WTC11 (cell line): ENCODE measurements at regions of chr6 and their contacts with region 1.

Region 1: DNA sequence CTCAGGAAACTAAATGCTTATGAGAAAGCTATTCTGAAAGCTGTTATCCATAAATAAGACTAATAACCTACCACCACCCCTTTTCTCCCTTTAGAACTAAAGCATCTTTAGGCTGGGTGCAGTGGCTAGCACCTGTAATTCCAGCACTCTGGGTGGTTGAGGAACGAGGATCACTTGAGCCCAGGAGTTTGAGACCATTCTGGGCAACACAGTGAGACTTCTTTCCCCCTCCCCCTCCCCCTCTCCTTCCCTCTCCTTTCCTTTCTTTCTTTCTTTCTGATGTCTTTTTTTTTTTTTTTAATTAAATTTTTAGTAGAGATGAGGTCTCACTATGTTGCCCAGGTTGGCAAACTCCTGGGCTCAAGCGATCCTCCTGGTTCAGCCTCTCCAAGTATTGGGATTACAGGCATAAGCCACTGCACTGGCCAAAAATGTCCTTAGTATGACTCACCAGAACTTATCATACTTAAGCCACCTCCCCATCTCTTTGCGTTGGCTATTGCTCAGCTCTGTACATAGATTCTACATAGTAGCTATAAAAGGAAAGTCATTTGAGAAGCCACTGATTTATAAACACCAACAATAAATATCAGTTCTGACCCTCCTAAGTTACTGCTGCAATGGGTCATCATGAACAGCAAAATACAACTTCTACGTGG is 54.8 kb upstream of the SPDEF start:
- DNase-seq: no peak
- ATAC-seq: no peak
- H3K4me3 Mint-ChIP-seq: no peak overlapping the region
- H3K27ac Mint-ChIP-seq: peak overlapping the region; percentile 14; the same call in 1 of the 2 replicates
- H3K4me1 Mint-ChIP-seq: peaks cover 2% of the 10 kb centered on the region; the same call in 1 of the 2 replicates
- H3K27me3 Mint-ChIP-seq: no peaks in the 10 kb centered on the region
- CTCF ChIP-seq: no peak

Region 2: DNA sequence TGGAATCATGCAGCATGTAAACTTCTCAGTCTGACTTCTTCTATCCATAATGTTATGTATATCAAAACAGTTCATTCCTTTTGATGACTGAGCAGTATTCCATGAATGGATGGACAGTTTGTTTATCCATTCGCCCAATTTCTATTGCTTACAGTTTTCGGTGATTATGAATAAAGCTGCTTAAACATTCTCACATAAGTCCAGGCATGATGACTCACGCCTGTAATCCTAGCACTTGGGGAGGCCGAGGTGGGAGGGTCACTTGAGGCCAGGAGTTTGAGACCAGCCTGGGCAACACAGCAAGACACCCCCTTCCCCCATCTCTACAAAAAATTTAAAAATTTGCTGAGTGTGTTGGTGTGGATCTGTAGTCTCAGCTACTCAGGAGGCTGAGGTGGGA is 397.2 kb before region 1 on chr6:
- CTCF ChIA-PET with region 1: no interaction called
- POLR2A ChIA-PET with region 1: no interaction called
- DNase-seq: no peak
- ATAC-seq: no peak
- H3K4me3 Mint-ChIP-seq: no peak overlapping the region
- H3K27ac Mint-ChIP-seq: no peak overlapping the region; the same call in 1 of the 2 replicates
- H3K4me1 Mint-ChIP-seq: no peaks in the 10 kb centered on the region
- H3K27me3 Mint-ChIP-seq: no peaks in the 10 kb centered on the region
- CTCF ChIP-seq: no peak

Region 3: GRCh38 chr6:34465531-34466241 is 145.3 kb before region 1 on chr6 and contains the start of gene PACSIN1:
- CTCF ChIA-PET with region 1: interaction called, 102 read pairs
- POLR2A ChIA-PET with region 1: no interaction called
- DNase-seq: peak; percentile 73
- ATAC-seq: peak; percentile 86
- H3K4me3 Mint-ChIP-seq: peak within 1 kb of the TSS; percentile 85
- H3K27ac Mint-ChIP-seq: no peak within 1 kb of the TSS
- H3K4me1 Mint-ChIP-seq: peaks cover 21% of the 10 kb centered on the region
- H3K27me3 Mint-ChIP-seq: peaks cover 9% of the 10 kb centered on the region
- CTCF ChIP-seq: no peak
- total RNA-seq, gene PACSIN1: 10.6 to 12.6 TPM (median 10.7 TPM) in 3 replicates

Region 4: GRCh38 chr6:34526992-34527728 is 83.8 kb before region 1 on chr6:
- CTCF ChIA-PET with region 1: interaction called, 34 read pairs
- POLR2A ChIA-PET with region 1: no interaction called
- DNase-seq: peak; percentile 96
- ATAC-seq: peak; percentile 72
- H3K4me3 Mint-ChIP-seq: peak overlapping the region; percentile 66
- H3K27ac Mint-ChIP-seq: no peak overlapping the region
- H3K4me1 Mint-ChIP-seq: peaks cover 25% of the 10 kb centered on the region
- H3K27me3 Mint-ChIP-seq: no peaks in the 10 kb centered on the region
- CTCF ChIP-seq: peak; percentile 52

Region 5: GRCh38 chr6:34592208-34592952 is 18.6 kb before region 1 on chr6:
- CTCF ChIA-PET with region 1: interaction called, 10 read pairs
- POLR2A ChIA-PET with region 1: no interaction called
- DNase-seq: no peak
- ATAC-seq: no peak
- H3K4me3 Mint-ChIP-seq: no peak overlapping the region
- H3K27ac Mint-ChIP-seq: peak overlapping the region; percentile 70; the same call in 1 of the 2 replicates
- H3K4me1 Mint-ChIP-seq: peaks cover 12% of the 10 kb centered on the region
- H3K27me3 Mint-ChIP-seq: no peaks in the 10 kb centered on the region
- CTCF ChIP-seq: no peak

Region 6: GRCh38 chr6:34633785-34634184 is 22.8 kb after region 1 on chr6:
- CTCF ChIA-PET with region 1: no interaction called
- POLR2A ChIA-PET with region 1: no interaction called
- DNase-seq: no peak
- ATAC-seq: no peak
- H3K4me3 Mint-ChIP-seq: no peak overlapping the region
- H3K27ac Mint-ChIP-seq: no peak overlapping the region
- H3K4me1 Mint-ChIP-seq: no peaks in the 10 kb centered on the region
- H3K27me3 Mint-ChIP-seq: no peaks in the 10 kb centered on the region
- CTCF ChIP-seq: no peak

Region 7: DNA sequence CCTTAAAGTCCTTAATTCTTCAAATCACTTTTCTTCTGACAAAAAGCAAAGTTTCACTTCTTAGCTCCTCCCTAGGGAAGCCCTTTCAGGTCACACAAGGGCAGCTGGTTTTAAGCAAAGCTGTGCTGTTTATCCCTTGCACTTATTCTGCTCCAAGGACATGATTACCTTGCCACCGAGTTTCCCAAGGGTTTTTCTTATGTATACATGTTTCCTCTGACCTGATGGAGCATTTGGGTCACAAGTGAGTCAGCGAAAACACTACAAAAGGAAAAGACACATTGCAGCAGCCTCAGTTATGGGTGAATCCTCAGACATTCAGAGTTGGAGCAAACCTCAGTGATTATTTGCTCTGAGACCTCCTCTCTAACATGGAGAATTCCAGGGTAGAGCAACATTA is 112.3 kb after region 1 on chr6:
- CTCF ChIA-PET with region 1: no interaction called
- POLR2A ChIA-PET with region 1: no interaction called
- DNase-seq: no peak
- ATAC-seq: peak; percentile 36; the same call in 1 of the 2 replicates
- H3K4me3 Mint-ChIP-seq: no peak overlapping the region
- H3K27ac Mint-ChIP-seq: peak overlapping the region; percentile 89
- H3K4me1 Mint-ChIP-seq: peaks cover 27% of the 10 kb centered on the region
- H3K27me3 Mint-ChIP-seq: no peaks in the 10 kb centered on the region; the same call in 1 of the 2 replicates
- CTCF ChIP-seq: no peak